B cell (primary cell): ENCODE measurements at regions of chr3 and their contacts with region 1.

Region 1: GRCh38 chr3:16842272-16843270 is 42.2 kb upstream of the PLCL2 start:
- DNase-seq: peak; percentile 90
- ATAC-seq: peak; percentile 89
- H3K4me3 ChIP-seq: peak overlapping the region in 4 of 5 experiments; percentile 12 to 50 (median 36)
- H3K4me3 Mint-ChIP-seq: peak overlapping the region; percentile 65
- H3K27ac ChIP-seq: peak overlapping the region; percentile 93 to 97
- H3K27ac Mint-ChIP-seq: peak overlapping the region; percentile 95
- H3K4me1 ChIP-seq: peaks cover 51 to 52% of the 10 kb centered on the region in 2 donors
- H3K4me1 Mint-ChIP-seq: peaks cover 66% of the 10 kb centered on the region
- H3K27me3 ChIP-seq: no peaks in the 10 kb centered on the region
- H3K27me3 Mint-ChIP-seq: no peaks in the 10 kb centered on the region
- CTCF ChIP-seq: no peak

Region 2: DNA sequence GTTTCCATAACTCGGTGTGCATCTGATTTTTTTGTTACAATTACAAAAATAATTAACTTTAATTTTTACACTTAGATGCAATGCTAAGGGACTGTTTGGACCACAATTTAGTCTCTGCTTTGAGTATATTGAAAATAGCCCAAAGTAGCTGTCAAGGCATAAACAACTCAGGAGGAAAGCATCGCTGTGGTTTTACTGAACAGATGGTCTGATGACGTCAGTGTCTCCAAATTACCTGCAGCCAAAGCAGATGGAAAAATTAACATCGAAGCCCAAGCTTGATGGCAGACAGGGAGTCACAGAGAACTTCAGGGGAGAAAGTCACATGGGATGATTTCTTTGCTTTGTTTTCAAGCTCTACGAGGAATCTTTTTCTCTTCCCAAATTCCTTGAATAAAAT is 40.9 kb before region 1 on chr3:
- CTCF ChIA-PET with region 1: no interaction called
- POLR2A ChIA-PET with region 1: no interaction called
- intact Hi-C with region 1: loop called (anchors 1 kb)
- DNase-seq: peak; percentile 55
- ATAC-seq: peak; percentile 52
- H3K4me3 ChIP-seq: no peak overlapping the region
- H3K4me3 Mint-ChIP-seq: peak overlapping the region; percentile 75
- H3K27ac ChIP-seq: peak overlapping the region in 1 of 2 donors; percentile 3
- H3K27ac Mint-ChIP-seq: peak overlapping the region; percentile 92
- H3K4me1 ChIP-seq: peaks cover 42 to 47% of the 10 kb centered on the region in 2 donors
- H3K4me1 Mint-ChIP-seq: peaks cover 46% of the 10 kb centered on the region
- H3K27me3 ChIP-seq: no peaks in the 10 kb centered on the region
- H3K27me3 Mint-ChIP-seq: no peaks in the 10 kb centered on the region
- CTCF ChIP-seq: no peak